Panc1 (cell line): ENCODE measurements at regions of chr7 and their contacts with region 1.

Region 1: DNA sequence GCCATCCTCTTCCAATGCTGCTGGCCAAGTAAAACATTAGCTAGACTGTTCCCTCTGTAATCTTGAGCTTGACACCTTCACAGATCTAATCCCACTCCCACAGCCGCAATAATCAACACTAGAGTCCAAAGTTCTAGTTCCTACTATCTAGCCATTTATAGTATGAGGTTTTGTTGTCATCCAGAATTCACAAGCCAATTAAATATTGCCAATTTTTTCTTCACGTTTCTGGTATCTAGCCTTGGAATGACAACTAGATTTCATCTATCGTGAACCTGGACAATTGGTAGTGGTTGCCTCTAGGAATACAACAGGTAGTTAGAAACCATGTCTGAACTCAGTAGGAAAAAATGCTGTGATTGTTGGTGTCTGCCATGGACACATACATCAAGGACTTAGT is 10.4 kb downstream of the WASL start:
- DNase-seq: no peak
- ATAC-seq: no peak
- H3K4me3 ChIP-seq: no peak overlapping the region
- H3K27ac ChIP-seq: no peak overlapping the region
- H3K4me1 ChIP-seq: no peaks in the 10 kb centered on the region
- H3K27me3 ChIP-seq: no peaks in the 10 kb centered on the region
- CTCF ChIP-seq: no peak

Region 2: DNA sequence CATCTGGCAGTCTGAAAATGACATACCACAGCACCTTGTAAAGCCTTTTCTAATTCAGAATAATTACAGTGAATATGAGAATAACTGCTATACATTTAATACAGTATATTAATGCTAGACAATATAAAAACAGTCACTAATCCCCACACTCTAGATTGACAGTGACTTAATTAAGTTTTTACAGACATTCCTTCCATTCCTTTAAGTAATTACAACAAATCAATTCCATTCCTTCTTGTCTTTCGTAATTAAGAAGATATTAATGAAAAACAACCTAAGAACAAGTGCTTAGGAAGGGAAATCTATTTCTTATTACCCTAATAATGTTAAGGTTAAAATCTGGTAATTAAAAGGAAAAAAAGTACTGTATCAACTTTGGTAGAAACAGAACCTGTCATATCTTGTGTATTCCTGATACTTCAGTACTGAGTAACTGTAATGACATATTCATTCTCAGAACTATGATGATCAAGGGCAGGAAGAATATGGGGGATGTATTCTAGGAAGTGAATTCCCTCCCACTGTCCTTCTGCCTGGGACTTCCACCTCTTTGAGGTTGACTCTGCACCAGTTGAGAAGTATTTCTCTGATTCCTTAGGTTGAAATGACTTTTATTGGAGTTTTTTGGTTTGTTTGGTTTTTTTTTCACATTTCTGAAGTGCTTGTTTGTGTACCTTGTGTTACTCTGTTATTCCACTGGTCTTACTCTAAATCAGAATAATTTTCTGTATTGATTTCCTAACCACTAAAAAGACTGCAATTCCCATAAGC is 26.6 kb before region 1 on chr7:
- CTCF ChIA-PET with region 1: interaction called, 15 read pairs
- POLR2A ChIA-PET with region 1: no interaction called
- in situ Hi-C with region 1: no loop called
- intact Hi-C with region 1: no loop called
- DNase-seq: no peak
- ATAC-seq: no peak
- H3K4me3 ChIP-seq: no peak overlapping the region
- H3K27ac ChIP-seq: no peak overlapping the region
- H3K4me1 ChIP-seq: peaks cover 8% of the 10 kb centered on the region
- H3K27me3 ChIP-seq: no peaks in the 10 kb centered on the region
- CTCF ChIP-seq: no peak